A549 (cell line): ENCODE measurements at regions of chr2 and their contacts with region 1.

Region 1: DNA sequence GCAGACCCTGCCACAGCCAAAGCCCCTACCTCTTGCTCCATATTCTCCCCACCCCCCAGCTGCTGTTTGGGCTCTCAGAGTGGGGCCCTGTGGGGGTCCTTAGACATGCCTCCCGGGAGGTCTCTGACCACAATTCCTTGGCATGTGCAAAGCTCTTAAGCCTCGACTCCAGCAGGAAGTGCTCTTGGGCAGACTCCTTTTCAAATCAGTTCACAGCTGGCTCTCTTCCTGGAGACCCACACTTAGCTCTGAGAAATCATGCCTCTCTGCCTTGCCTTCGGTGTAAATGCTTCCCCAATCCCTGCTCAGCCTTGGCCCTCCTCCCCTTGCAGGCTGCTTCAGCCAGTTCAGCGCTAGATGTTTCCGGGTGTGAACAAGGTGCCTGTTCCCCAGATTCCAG is 46.9 kb downstream of the NGEF start:
- DNase-seq: no peak
- ATAC-seq: no peak
- H3K4me3 ChIP-seq: no peak overlapping the region
- H3K27ac ChIP-seq: no peak overlapping the region
- H3K4me1 ChIP-seq: no peaks in the 10 kb centered on the region
- CTCF ChIP-seq: no peak
- EP300 ChIP-seq: no peak
- POLR2A ChIP-seq: no peak
- RAD21 ChIP-seq: no peak

Region 2: DNA sequence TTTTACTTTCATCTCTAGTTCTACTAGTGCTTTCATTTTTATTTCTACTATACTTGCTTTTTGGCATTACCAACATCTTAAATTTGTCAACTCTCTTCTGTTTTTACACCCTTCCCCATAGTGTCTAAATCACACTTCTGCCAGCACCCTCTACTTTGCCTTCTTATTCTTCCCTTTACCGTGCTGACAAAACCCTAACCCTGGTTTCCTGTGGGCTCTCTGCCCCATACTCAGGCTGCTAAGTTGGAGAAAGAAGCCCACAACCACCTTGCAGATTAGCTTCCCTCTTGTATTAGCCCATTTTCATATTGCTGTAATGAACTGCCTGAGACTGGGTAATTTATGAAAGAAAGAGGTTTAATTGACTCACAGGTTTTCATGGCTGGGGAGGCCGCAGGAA is 244.2 kb before region 1 on chr2:
- CTCF ChIA-PET with region 1: no interaction called
- POLR2A ChIA-PET with region 1: no interaction called
- DNase-seq: no peak
- ATAC-seq: no peak
- H3K4me3 ChIP-seq: no peak overlapping the region
- H3K27ac ChIP-seq: no peak overlapping the region
- H3K4me1 ChIP-seq: no peaks in the 10 kb centered on the region
- CTCF ChIP-seq: no peak
- EP300 ChIP-seq: no peak
- POLR2A ChIP-seq: no peak
- RAD21 ChIP-seq: no peak

Region 3: GRCh38 chr2:232979871-232980461 is 13.8 kb after region 1 on chr2:
- CTCF ChIA-PET with region 1: interaction called, 16 read pairs
- POLR2A ChIA-PET with region 1: no interaction called
- DNase-seq: peak; percentile 79 to 88
- ATAC-seq: peak; percentile 92 to 97
- H3K4me3 ChIP-seq: no peak overlapping the region
- H3K27ac ChIP-seq: peak overlapping the region; percentile 74 to 86
- H3K4me1 ChIP-seq: peaks cover 36% of the 10 kb centered on the region
- CTCF ChIP-seq: peak; percentile 62
- EP300 ChIP-seq: peak in 1 of 2 experiments; percentile 39; a peak in 1 of 5 replicates
- POLR2A ChIP-seq: no peak
- RAD21 ChIP-seq: peak; percentile 87 to 88